ENCODE measurements at regions of chrX and their contacts with region 1.

Region 1: GRCh38 chrX:37745354-37745753 is 34.5 kb upstream of the CYBB start:
- DNase-seq: peak; percentile 53 to 94 (median 73)

Region 2: DNA sequence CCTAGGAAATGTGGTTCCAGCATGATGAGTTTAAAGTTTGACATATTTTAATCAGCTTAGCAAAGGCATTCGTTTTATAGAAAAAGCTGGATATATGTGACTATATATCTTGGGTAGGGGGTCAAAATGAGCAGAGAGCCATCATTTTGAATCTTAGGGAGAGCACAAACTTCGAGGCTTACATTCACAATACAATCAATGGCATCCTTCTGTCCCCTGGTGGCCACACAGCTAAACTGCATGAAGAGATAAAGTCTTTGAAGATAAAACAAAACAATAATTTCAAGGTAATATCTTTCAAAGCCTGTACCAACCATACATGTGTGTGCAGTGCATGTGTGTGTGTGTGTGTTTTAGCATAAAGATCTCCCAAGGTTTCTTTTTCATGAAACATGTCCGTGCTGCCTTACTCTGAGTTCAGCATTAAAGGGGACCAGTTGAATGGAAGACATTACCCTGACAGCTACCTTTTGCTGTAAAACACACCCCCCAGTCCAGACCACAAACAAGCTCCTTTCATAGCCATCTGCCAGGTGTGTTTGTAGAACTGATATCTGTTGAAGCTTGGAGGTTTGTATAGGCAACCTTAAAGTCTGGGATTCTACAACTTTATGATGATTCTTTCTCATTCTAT is 80.0 kb after region 1 on chrX:
- intact Hi-C with region 1: loop called (anchors 1 kb)
- DNase-seq: peak in 5 of 10 donors; percentile 18 to 55 (median 36)

Region 3: GRCh38 chrX:38166478-38167083 is 421.2 kb after region 1 on chrX:
- intact Hi-C with region 1: loop called (anchors 5 kb)
- DNase-seq: no peak

Region 4: GRCh38 chrX:38327007-38327774 is 581.8 kb after region 1 on chrX and contains the start of gene RPGR:
- intact Hi-C with region 1: loop called (anchors 10 kb)
- DNase-seq: peak; percentile 88 to 99 (median 90)